Posterior vena cava (tissue), 2 donors: ENCODE measurements at regions of chr13 and their contacts with region 1.

Region 1: DNA sequence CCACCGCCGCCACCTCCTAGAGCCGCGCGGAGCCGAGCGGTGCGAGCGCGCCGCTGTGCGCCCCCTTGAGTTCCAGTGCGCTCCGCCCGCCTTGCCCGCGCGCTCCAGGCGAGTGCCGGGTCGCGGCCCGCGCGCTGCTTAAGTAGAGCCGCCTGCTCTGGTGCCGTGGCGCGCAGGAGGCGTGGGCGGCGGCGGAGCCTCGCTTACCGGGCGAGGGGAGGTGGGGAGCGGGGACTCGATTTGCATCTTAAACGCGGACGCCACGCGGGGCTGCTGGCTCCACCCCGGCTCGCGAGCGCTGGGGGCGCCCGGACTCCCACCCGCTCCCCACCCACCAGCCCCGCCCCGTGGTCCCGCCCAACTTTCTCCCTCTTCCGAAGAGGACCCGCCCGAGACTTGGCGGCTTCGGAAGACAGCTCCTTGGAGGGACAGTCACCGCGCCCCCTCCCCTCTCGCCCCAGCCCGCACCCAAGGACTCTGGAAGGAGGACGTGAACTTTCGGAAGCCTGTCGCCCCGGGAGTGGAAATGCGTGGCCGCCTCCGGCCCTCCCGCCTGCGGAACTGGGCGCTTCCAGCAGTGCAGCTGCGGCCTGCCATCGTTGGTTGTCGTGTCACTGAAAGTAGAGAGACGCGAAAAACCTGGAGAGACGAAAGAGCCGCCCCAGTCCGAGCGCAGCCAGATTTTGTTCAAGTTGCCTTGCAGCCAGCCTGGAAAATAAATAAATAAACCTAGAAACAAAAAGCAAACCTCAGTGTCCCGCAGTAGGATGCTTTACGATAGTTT is at the start of gene KCTD12:
- DNase-seq: peak; percentile 96
- total RNA-seq, gene KCTD12: 103 to 112 TPM

Region 2: GRCh38 chr13:76489274-76489673 is 397.2 kb before region 1 on chr13:
- intact Hi-C with region 1: loop called in 1 of 2 experiments (anchors 10 kb)
- DNase-seq: no peak

Region 3: DNA sequence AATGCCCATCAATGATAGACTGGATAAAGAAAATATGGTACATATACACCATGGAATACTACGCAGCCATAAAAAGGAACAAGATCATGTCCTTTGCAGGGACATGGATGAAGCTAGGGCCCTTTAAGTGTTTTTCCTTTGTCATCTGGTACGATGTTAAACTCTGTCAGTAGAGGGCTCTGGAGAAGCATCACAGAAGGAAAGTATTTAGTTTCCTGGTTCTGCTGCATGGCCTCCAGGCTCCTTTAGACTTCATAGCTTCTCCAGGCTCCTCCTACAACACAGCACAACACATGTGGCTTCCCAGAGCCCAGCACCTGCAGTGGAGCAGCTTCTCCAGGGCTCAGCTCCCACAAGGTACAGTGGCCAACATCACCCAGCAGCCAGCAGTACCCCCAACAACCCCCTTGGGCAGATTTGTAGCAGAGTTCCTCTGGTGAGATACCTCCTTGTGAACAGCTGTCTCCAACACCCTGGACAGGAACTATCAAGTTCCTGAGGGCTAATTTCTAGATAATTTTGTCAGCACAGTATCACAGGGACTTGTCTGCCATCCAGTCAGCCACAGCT is 63.7 kb before region 1 on chr13:
- intact Hi-C with region 1: loop called in 1 of 2 experiments (anchors 10 kb)
- DNase-seq: peak; percentile 64

Region 4: GRCh38 chr13:76828316-76828741 is 58.2 kb before region 1 on chr13:
- intact Hi-C with region 1: loop called (anchors 2 to 10 kb)
- DNase-seq: no peak

Region 5: GRCh38 chr13:76954538-76954937 is 68.1 kb after region 1 on chr13:
- intact Hi-C with region 1: no loop called
- DNase-seq: no peak

Region 6: GRCh38 chr13:77374786-77375185 is 488.3 kb after region 1 on chr13:
- intact Hi-C with region 1: no loop called
- DNase-seq: no peak